ENCODE measurements at regions of chr11 and their contacts with region 1.

Region 1: GRCh38 chr11:67233584-67234190 is 32.6 kb upstream of the GRK2 start:
- DNase-seq: no peak
- ATAC-seq: peak; percentile 71
- H3K4me3 Mint-ChIP-seq: no peak overlapping the region
- H3K27ac Mint-ChIP-seq: peak overlapping the region; percentile 65
- H3K4me1 Mint-ChIP-seq: peaks cover 14% of the 10 kb centered on the region
- H3K27me3 Mint-ChIP-seq: no peaks in the 10 kb centered on the region
- CTCF ChIP-seq: no peak

Region 2: DNA sequence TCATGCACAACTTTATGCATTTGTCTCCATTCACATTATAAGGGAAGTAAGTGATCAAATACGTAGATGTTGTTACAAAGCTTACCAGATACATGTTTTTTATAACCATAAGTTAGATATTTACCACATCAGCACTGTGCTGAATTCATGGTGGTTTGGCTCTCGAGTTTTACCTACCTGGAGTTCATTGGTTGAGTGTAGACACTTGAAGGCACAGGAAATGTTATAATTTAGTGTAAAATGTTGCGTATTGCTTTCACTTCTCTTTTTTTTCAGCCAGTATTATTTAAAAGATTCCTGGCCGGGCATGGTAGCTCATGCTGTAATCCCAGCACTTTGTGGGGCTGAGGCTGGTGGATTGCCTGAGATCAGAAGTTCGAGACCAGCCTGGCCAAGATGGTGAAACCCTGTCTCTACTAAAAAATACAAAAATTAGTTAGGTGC is 20.5 kb before region 1 on chr11:
- CTCF ChIA-PET with region 1: no interaction called
- POLR2A ChIA-PET with region 1: interaction called, 17 read pairs
- intact Hi-C with region 1: loop called (anchors 2 kb)
- DNase-seq: no peak
- ATAC-seq: peak; percentile 95
- H3K4me3 Mint-ChIP-seq: peak overlapping the region; percentile 36
- H3K27ac Mint-ChIP-seq: peak overlapping the region; percentile 55
- H3K4me1 Mint-ChIP-seq: peaks cover 20% of the 10 kb centered on the region
- H3K27me3 Mint-ChIP-seq: no peaks in the 10 kb centered on the region
- CTCF ChIP-seq: no peak

Region 3: GRCh38 chr11:67293090-67293489 is 59.4 kb after region 1 on chr11:
- CTCF ChIA-PET with region 1: no interaction called
- POLR2A ChIA-PET with region 1: no interaction called
- intact Hi-C with region 1: no loop called
- DNase-seq: no peak
- ATAC-seq: no peak
- H3K4me3 Mint-ChIP-seq: no peak overlapping the region
- H3K27ac Mint-ChIP-seq: no peak overlapping the region
- H3K4me1 Mint-ChIP-seq: peaks cover 29% of the 10 kb centered on the region
- H3K27me3 Mint-ChIP-seq: no peaks in the 10 kb centered on the region
- CTCF ChIP-seq: no peak